PC-9 (cell line): ENCODE measurements at regions of chr15 and their contacts with region 1.

Region 1: DNA sequence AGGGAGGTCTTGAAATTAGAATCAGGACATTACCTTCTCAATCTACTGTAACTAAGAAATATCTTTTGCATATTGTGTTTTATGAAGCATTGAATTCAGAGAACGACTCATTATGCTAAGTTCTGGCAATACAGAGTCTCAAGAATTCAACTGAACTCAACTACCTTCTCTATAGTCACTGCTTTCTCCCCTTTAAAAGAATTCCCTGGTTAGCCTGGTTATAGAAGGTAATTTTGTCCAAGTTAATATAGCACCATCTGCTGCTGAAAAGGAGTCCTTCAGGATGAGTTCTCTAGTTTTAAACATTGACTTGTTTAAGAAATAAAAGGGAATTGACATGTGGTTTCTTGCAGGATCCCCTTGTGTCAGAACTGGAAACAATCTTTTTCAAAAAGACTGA is 60.2 kb downstream of the IL16 start:
- DNase-seq: no peak
- H3K4me3 ChIP-seq: no peak overlapping the region
- H3K27ac ChIP-seq: no peak overlapping the region
- H3K4me1 ChIP-seq: no peaks in the 10 kb centered on the region
- H3K27me3 ChIP-seq: peaks cover 60% of the 10 kb centered on the region
- CTCF ChIP-seq: peak; percentile 50

Region 2: DNA sequence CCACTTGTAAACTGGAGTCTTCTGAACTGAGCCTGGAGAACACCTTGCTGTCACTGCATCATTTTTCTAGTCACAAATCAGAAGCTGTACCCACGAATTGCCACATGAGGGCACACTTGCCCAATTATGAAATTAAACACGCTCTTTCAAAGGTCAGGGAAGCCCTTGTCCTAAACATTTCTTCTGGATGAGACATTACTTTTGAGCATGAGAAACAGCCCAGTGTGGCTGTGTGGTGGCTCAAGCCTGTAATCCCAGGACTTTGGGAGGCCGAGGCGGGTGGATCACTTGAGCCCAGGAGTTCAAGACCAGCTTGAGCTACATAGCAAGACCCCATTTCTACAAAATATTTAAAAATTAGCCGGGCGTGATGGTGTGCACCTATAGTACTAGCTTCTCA is 150.4 kb before region 1 on chr15:
- CTCF ChIA-PET with region 1: no interaction called
- POLR2A ChIA-PET with region 1: no interaction called
- intact Hi-C with region 1: loop called (anchors 1 kb)
- DNase-seq: peak; percentile 48
- H3K4me3 ChIP-seq: no peak overlapping the region
- H3K27ac ChIP-seq: no peak overlapping the region
- H3K4me1 ChIP-seq: no peaks in the 10 kb centered on the region
- H3K27me3 ChIP-seq: peaks cover 17% of the 10 kb centered on the region; the same call in 1 of the 2 replicates
- CTCF ChIP-seq: peak; percentile 78